Naive thymus-derived CD4-positive, alpha-beta T cell (primary cell): ENCODE measurements at regions of chr10 and their contacts with region 1.

Region 1: GRCh38 chr10:124461438-124462347 is at the start of gene LHPP:
- DNase-seq: peak; percentile 77 to 91 (median 87)
- ATAC-seq: peak; percentile 98
- H3K4me3 ChIP-seq: peak within 1 kb of the TSS; percentile 76
- H3K4me3 Mint-ChIP-seq: peak within 1 kb of the TSS; percentile 69 to 96 (median 90)
- H3K27ac ChIP-seq: peak within 1 kb of the TSS; percentile 76
- H3K27ac Mint-ChIP-seq: peak within 1 kb of the TSS; percentile 82 to 98 (median 96)
- H3K4me1 ChIP-seq: peaks cover 13 to 21% of the 10 kb centered on the region in 2 donors
- H3K4me1 Mint-ChIP-seq: peaks cover 23 to 35% (median 28%) of the 10 kb centered on the region in 7 donors
- H3K27me3 ChIP-seq: no peaks in the 10 kb centered on the region
- H3K27me3 Mint-ChIP-seq: peaks cover 0 to 17% (median 11%) of the 10 kb centered on the region in 5 donors
- total RNA-seq, gene LHPP: 19.8 to 31.2 (median 27.6) TPM

Region 2: DNA sequence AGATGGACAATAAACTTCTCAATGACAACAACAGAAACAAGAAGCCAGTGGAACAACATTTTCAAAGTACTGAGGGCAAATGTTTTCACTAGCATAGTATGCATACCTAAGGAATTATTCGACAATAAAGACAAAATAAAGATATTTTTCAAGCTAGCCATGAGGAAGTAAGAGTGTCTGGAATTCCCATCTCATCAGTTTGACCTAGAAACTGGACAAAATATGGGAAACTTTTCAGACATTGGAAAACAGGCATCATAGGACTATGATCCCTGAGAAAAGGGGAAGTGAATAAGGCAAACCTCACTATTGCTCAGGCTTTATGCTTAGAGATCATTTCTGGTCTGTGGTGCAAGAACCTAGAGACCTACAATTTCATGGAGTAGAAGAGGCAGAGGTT is 129.3 kb before region 1 on chr10:
- CTCF ChIA-PET with region 1: no interaction called
- POLR2A ChIA-PET with region 1: no interaction called
- intact Hi-C with region 1: no loop called
- DNase-seq: no peak
- ATAC-seq: no peak
- H3K4me3 ChIP-seq: no peak overlapping the region
- H3K4me3 Mint-ChIP-seq: no peak overlapping the region
- H3K27ac ChIP-seq: no peak overlapping the region
- H3K27ac Mint-ChIP-seq: no peak overlapping the region
- H3K4me1 ChIP-seq: no peaks in the 10 kb centered on the region
- H3K4me1 Mint-ChIP-seq: peaks cover 0 to 7% (median 0%) of the 10 kb centered on the region in 7 donors
- H3K27me3 ChIP-seq: no peaks in the 10 kb centered on the region
- H3K27me3 Mint-ChIP-seq: peaks cover 4 to 22% (median 11%) of the 10 kb centered on the region in 5 donors

Region 3: GRCh38 chr10:124791378-124792348 is 330.0 kb after region 1 on chr10 and contains the start of gene EEF1AKMT2:
- CTCF ChIA-PET with region 1: no interaction called
- POLR2A ChIA-PET with region 1: no interaction called
- intact Hi-C with region 1: loop called in 1 of 2 experiments (anchors 1 kb)
- DNase-seq: peak; percentile 68 to 88 (median 81)
- ATAC-seq: peak; percentile 99
- H3K4me3 ChIP-seq: peak within 1 kb of the TSS; percentile 92
- H3K4me3 Mint-ChIP-seq: peak within 1 kb of the TSS; percentile 90 to 100 (median 98)
- H3K27ac ChIP-seq: peak within 1 kb of the TSS; percentile 77
- H3K27ac Mint-ChIP-seq: peak within 1 kb of the TSS; percentile 89 to 96 (median 95)
- H3K4me1 ChIP-seq: peaks cover 5 to 9% of the 10 kb centered on the region in 2 donors
- H3K4me1 Mint-ChIP-seq: peaks cover 11 to 30% (median 21%) of the 10 kb centered on the region in 7 donors
- H3K27me3 ChIP-seq: no peaks in the 10 kb centered on the region
- H3K27me3 Mint-ChIP-seq: peaks cover 0 to 7% (median 0%) of the 10 kb centered on the region in 5 donors
- total RNA-seq, gene EEF1AKMT2: 11.5 to 23.0 (median 21.0) TPM

Region 4: DNA sequence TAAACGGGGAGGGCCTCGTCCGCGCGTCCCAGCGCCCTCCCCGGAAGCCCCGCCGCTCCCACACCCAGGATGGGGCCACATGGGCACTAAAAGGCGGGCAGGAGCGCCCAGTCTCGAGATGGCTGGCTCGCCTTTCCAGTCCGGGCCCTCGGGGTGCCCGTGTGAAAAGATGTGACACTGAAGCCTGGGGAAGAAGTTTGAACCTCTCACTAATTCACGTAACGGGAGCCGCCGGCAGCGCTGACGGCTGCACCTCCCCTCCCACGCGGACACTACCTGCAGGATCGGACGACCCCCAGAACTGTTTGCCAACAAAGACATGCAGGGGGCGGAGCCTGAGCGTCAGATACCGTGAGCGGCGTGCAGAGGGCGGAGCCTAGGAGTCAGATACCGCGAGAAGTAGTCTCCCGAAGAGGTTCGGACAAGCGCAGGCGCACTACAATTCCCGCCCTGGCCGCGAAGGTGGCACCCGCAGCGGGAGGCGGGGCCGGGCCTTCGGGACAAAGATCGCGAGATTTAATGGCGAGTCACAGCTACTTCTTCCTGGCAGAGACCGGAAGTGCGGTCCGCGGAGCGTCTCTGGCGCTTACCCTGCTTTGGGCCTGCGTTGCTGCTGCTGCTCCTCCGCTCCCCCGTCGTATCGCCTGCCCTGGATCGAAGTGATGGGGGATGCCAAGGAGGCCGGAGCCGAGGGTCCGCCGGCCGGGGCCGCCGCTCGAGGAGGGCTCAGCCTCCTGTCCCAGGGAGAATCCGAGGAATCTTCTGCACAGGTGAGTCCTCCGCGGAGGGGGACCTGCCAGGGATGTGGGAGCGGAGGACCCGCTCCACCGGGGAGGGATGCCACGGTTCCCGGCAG is 1257.7 kb after region 1 on chr10 and contains the start of gene EDRF1:
- CTCF ChIA-PET with region 1: no interaction called
- POLR2A ChIA-PET with region 1: no interaction called
- intact Hi-C with region 1: loop called in 1 of 2 experiments (anchors 1 kb)
- DNase-seq: peak; percentile 96 to 100 (median 99)
- ATAC-seq: peak; percentile 97
- H3K4me3 ChIP-seq: peak within 1 kb of the TSS; percentile 95
- H3K4me3 Mint-ChIP-seq: peak within 1 kb of the TSS; percentile 89 to 99 (median 98)
- H3K27ac ChIP-seq: peak within 1 kb of the TSS; percentile 94
- H3K27ac Mint-ChIP-seq: peak within 1 kb of the TSS; percentile 96 to 99 (median 97)
- H3K4me1 ChIP-seq: peaks cover 20 to 24% of the 10 kb centered on the region in 2 donors
- H3K4me1 Mint-ChIP-seq: peaks cover 6 to 47% (median 39%) of the 10 kb centered on the region in 7 donors
- H3K27me3 ChIP-seq: no peaks in the 10 kb centered on the region
- H3K27me3 Mint-ChIP-seq: peaks cover 0 to 3% (median 0%) of the 10 kb centered on the region in 5 donors
- total RNA-seq, gene EDRF1: 33.8 to 64.4 (median 53.8) TPM